GM12878 (cell line): ENCODE measurements at regions of chr2 and their contacts with region 1.

Region 1: GRCh38 chr2:95207111-95207961 is at the start of gene ZNF892:
- DNase-seq: peak; percentile 45
- ATAC-seq: peak; percentile 98
- H3K4me3 ChIP-seq: peak within 1 kb of the TSS; percentile 79
- H3K27ac ChIP-seq: peak within 1 kb of the TSS; percentile 30; the same call in 1 of the 2 replicates
- H3K4me1 ChIP-seq: no peaks in the 10 kb centered on the region
- H3K27me3 ChIP-seq: no peaks in the 10 kb centered on the region
- CTCF ChIP-seq: peak; percentile 52 to 77 (median 58); a peak in 5 of 6 replicates
- EP300 ChIP-seq: no peak
- POLR2A ChIP-seq: peak; percentile 69
- RAD21 ChIP-seq: peak; percentile 57
- polyA plus RNA-seq, gene ZNF892: not detected

Region 2: DNA sequence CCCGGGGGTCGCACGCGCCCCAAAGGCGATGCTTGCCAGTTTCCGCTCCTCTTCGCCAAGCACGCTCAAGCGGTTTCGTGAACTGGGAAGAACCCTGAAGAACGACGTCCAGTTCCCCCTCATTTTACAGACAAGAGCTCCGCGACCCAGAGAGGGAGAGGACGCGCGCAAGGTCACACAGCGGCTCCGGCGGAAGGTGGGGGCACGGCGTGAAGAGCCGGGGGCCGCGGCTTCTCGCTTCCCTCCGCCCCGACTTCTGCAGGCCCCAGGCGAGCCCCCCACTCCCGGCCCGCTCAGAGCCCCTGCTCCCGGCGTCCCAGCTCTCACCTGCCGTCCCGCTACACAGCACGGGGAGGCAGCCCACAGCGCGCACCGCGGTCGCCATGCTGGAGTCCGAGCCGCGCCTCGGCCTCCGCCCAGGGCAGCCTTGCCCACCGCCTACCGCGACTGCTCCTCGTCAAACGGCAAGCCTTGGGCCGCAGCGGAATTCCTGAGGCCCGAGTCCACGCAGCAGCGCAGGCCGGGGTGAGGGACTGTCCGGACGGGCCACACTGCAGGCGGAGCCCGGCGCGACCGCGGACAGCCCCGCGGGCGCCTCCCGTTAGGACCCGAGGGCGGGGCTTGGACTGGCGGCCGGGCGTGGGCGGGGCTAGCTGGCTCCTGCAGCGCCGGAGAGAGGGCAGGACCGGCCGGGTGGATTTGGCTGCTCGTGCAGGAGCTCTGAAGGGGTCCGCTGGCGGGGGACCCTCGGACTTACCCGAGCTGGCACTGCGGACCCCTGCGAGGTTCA is 85.7 kb before region 1 on chr2 and contains the start of gene MRPS5:
- CTCF ChIA-PET with region 1: interaction called, 3 read pairs
- POLR2A ChIA-PET with region 1: interaction called, 3 read pairs
- RAD21 ChIA-PET with region 1: no interaction called
- SMC1A ChIA-PET with region 1: no interaction called
- in situ Hi-C with region 1: loop called (anchors 5 kb)
- intact Hi-C with region 1: loop called (anchors 2 kb)
- DNase-seq: peak; percentile 13
- ATAC-seq: peak; percentile 93
- H3K4me3 ChIP-seq: peak within 1 kb of the TSS; percentile 93
- H3K27ac ChIP-seq: peak within 1 kb of the TSS; percentile 98
- H3K4me1 ChIP-seq: peaks cover 16% of the 10 kb centered on the region
- H3K27me3 ChIP-seq: no peaks in the 10 kb centered on the region
- CTCF ChIP-seq: 0 out of 6 replicates have a peak, but pooled peaks of 2 of the 3 experiments have one; percentile 5 to 23
- EP300 ChIP-seq: no peak
- POLR2A ChIP-seq: peak; percentile 94
- RAD21 ChIP-seq: no peak
- polyA plus RNA-seq, gene MRPS5: 54.8 to 77.0 TPM

Region 3: DNA sequence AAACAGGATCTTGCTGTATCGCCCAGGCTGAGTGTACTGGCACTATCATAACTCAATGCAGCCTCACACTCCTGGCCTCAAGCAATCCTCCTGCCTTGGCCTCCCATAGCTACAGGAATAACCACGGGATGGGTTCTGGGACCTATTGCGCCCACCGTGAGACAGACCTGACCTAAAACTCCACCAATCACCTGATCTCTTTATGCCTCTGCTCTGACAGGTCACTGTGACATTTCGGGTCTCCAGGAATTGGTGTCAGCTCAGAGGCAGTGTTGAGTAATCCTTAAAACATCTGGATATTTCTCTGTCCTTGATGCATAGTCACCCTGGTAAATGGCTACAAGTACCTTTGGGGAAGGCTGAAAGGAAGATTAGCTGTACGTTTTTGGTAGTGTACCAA is 80.5 kb before region 1 on chr2:
- CTCF ChIA-PET with region 1: interaction called, 3 read pairs
- POLR2A ChIA-PET with region 1: interaction called, 3 read pairs
- RAD21 ChIA-PET with region 1: no interaction called
- SMC1A ChIA-PET with region 1: no interaction called
- in situ Hi-C with region 1: loop called (anchors 5 kb)
- intact Hi-C with region 1: loop called (anchors 2 kb)
- DNase-seq: no peak
- ATAC-seq: no peak
- H3K4me3 ChIP-seq: no peak overlapping the region
- H3K27ac ChIP-seq: no peak overlapping the region
- H3K4me1 ChIP-seq: no peaks in the 10 kb centered on the region; the same call in 1 of the 2 replicates
- H3K27me3 ChIP-seq: no peaks in the 10 kb centered on the region
- CTCF ChIP-seq: no peak
- EP300 ChIP-seq: no peak
- POLR2A ChIP-seq: no peak
- RAD21 ChIP-seq: no peak

Region 4: GRCh38 chr2:95165129-95166064 is 41.9 kb before region 1 on chr2 and contains the start of gene ZNF2:
- CTCF ChIA-PET with region 1: no interaction called
- POLR2A ChIA-PET with region 1: no interaction called
- RAD21 ChIA-PET with region 1: no interaction called
- SMC1A ChIA-PET with region 1: no interaction called
- in situ Hi-C with region 1: no loop called
- intact Hi-C with region 1: loop called (anchors 2 kb)
- DNase-seq: peak; percentile 75
- ATAC-seq: peak; percentile 98
- H3K4me3 ChIP-seq: peak within 1 kb of the TSS; percentile 86
- H3K27ac ChIP-seq: peak within 1 kb of the TSS; percentile 95
- H3K4me1 ChIP-seq: peaks cover 3% of the 10 kb centered on the region; the same call in 1 of the 2 replicates
- H3K27me3 ChIP-seq: no peaks in the 10 kb centered on the region
- CTCF ChIP-seq: no peak
- EP300 ChIP-seq: no peak
- POLR2A ChIP-seq: peak; percentile 99
- RAD21 ChIP-seq: no peak
- polyA plus RNA-seq, gene ZNF2: 3.0 to 3.4 TPM

Region 5: GRCh38 chr2:95264624-95265023 is 57.3 kb after region 1 on chr2:
- CTCF ChIA-PET with region 1: no interaction called
- POLR2A ChIA-PET with region 1: no interaction called
- RAD21 ChIA-PET with region 1: no interaction called
- SMC1A ChIA-PET with region 1: no interaction called
- in situ Hi-C with region 1: no loop called
- intact Hi-C with region 1: no loop called
- DNase-seq: no peak
- ATAC-seq: no peak
- H3K4me3 ChIP-seq: no peak overlapping the region
- H3K27ac ChIP-seq: no peak overlapping the region
- H3K4me1 ChIP-seq: no peaks in the 10 kb centered on the region
- H3K27me3 ChIP-seq: peaks cover 0 to 1% of the 10 kb centered on the region in 2 experiments; a peak in 2 of 4 replicates
- CTCF ChIP-seq: no peak
- EP300 ChIP-seq: no peak
- POLR2A ChIP-seq: no peak
- RAD21 ChIP-seq: no peak